Left ventricle myocardium superior (tissue), 1 donor: ENCODE measurements at regions of chr2 and their contacts with region 1.

Region 1: GRCh38 chr2:139411236-139411635 is 631.0 kb upstream of the NXPH2 start:
- DNase-seq: no peak
- ATAC-seq: no peak

Region 2: DNA sequence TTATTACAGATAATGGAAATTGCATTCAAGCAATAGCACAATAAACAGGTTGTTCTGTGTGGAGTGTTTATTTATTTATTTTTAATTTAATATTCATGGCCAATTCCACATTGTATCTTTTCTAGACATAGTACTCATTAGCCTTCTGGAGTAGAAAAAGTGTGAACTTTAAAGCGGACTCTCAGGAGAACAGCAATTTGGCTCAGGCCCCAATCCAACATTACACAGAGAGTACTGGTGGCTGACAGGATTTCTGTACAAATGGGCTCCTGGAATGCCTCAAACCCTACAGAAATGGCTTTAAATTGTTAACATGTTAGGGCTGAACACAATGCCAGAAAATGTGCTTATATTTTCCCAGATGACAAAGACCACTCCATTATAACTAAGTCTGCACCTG is 97.2 kb before region 1 on chr2:
- intact Hi-C with region 1: no loop called
- DNase-seq: no peak
- ATAC-seq: no peak

Region 3: GRCh38 chr2:139438462-139438861 is 27.2 kb after region 1 on chr2:
- intact Hi-C with region 1: loop called (anchors 2 kb)
- DNase-seq: no peak
- ATAC-seq: no peak